Activated CD4-positive, alpha-beta memory T cell treated with anti-CD3 and anti-CD28 coated beads for 36 hours (primary cell): ENCODE measurements at regions of chr9 and their contacts with region 1.

Region 1: DNA sequence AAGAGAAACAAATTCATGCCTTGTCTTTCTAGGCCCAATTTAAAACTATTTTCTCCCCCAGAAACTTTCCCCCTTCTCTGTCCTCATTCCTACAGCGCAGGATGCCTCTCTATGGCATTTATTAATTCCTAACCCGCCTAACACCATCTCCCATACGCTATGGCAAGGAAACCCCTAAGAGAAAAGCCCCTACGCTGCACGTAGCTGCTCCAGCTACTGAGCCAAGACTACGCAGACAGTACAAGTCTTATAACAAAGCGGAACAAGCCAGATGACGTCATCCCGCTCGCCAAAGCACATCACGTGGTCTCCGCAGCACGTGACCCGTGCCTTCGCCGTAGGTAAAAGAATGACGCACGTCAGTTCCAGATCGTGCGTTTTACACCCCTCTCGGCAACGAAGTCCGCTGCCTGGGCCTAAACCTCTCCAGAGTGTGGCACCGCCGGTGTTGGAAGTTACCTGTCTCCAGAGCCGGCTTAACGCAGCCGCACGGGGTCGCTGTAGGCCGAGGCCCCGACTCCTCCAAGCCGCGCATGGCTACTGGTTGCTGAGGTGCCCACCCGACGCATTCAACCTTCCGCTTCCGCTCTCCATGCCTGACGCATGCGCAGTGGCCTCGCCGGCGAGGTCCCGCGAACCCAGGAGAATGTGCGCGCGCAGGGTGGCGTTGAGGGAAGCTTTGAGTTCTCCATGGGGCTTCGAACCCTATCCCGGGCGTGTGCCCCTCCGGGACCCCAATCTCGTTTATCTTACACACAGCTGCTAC is at the start of gene TRMO:
- DNase-seq: peak; percentile 98
- H3K4me3 Mint-ChIP-seq: peak within 1 kb of the TSS; percentile 85
- H3K27ac Mint-ChIP-seq: peak within 1 kb of the TSS; percentile 96
- H3K4me1 Mint-ChIP-seq: peaks cover 39% of the 10 kb centered on the region
- H3K27me3 Mint-ChIP-seq: peaks cover 2% of the 10 kb centered on the region
- total RNA-seq, gene TRMO: 13.3 to 13.4 TPM

Region 2: DNA sequence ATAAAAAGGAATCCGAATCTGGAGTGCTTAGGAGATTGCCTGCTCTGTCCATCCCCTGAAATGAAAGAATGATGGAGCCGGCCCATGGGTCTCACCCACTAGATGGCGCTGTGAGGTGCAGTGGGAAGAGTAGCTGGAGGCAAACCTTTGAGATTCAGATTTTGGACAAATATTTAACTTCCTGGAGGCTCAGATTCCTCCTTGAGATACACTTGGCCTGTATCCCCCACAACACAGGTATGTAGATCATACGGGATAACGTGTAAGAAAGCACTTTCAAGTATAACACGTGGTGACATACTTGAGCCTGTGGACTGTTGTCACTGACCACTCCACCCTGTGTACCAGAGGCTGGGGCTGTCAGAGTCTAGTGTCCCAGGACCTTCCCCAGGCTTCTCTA is 32.1 kb before region 1 on chr9:
- CTCF ChIA-PET with region 1: interaction called, 17 read pairs
- POLR2A ChIA-PET with region 1: interaction called, 4 read pairs
- intact Hi-C with region 1: loop called (anchors 1 kb)
- DNase-seq: peak; percentile 82
- H3K4me3 Mint-ChIP-seq: no peak overlapping the region
- H3K27ac Mint-ChIP-seq: no peak overlapping the region
- H3K4me1 Mint-ChIP-seq: peaks cover 7% of the 10 kb centered on the region
- H3K27me3 Mint-ChIP-seq: no peaks in the 10 kb centered on the region

Region 3: GRCh38 chr9:97911970-97912369 is 10.2 kb before region 1 on chr9:
- CTCF ChIA-PET with region 1: interaction called, 51 read pairs
- POLR2A ChIA-PET with region 1: interaction called, 26 read pairs
- intact Hi-C with region 1: no loop called
- DNase-seq: no peak
- H3K4me3 Mint-ChIP-seq: no peak overlapping the region
- H3K27ac Mint-ChIP-seq: no peak overlapping the region
- H3K4me1 Mint-ChIP-seq: peaks cover 76% of the 10 kb centered on the region
- H3K27me3 Mint-ChIP-seq: no peaks in the 10 kb centered on the region

Region 4: GRCh38 chr9:97982683-97983588 is 60.8 kb after region 1 on chr9 and contains the start of gene ANP32B:
- CTCF ChIA-PET with region 1: interaction called, 36 read pairs
- POLR2A ChIA-PET with region 1: interaction called, 77 read pairs
- intact Hi-C with region 1: loop called (anchors 1 kb)
- DNase-seq: peak; percentile 96
- H3K4me3 Mint-ChIP-seq: peak within 1 kb of the TSS; percentile 83
- H3K27ac Mint-ChIP-seq: peak within 1 kb of the TSS; percentile 93
- H3K4me1 Mint-ChIP-seq: peaks cover 37% of the 10 kb centered on the region
- H3K27me3 Mint-ChIP-seq: no peaks in the 10 kb centered on the region
- total RNA-seq, gene ANP32B: 352 to 358 TPM

Region 5: GRCh38 chr9:98034593-98035546 is 112.7 kb after region 1 on chr9:
- CTCF ChIA-PET with region 1: interaction called, 99 read pairs
- POLR2A ChIA-PET with region 1: interaction called, 5 read pairs
- intact Hi-C with region 1: loop called (anchors 1 kb)
- DNase-seq: peak; percentile 92
- H3K4me3 Mint-ChIP-seq: peak overlapping the region; percentile 27
- H3K27ac Mint-ChIP-seq: no peak overlapping the region
- H3K4me1 Mint-ChIP-seq: peaks cover 8% of the 10 kb centered on the region
- H3K27me3 Mint-ChIP-seq: peaks cover 1% of the 10 kb centered on the region

Region 6: DNA sequence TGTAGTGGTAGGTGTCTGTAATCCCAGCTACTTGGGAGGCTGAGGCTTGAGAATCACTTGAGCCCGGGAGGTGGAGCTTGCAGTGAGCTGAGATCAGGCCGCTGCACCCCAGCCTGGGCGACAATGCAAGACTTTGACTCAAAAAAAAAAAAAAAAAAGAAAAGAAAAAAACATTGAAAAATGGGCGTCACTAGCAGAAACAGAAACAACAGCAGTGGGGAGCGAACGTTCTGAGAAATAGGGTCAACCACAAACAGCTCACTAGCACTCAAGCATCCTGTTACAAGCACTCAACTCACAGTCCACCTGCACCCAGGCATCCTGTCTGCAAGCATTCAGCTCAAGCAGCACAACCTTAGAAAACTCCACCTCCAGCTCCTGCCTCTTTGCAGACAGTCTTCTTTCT is 179.7 kb after region 1 on chr9:
- CTCF ChIA-PET with region 1: no interaction called
- POLR2A ChIA-PET with region 1: no interaction called
- intact Hi-C with region 1: loop called (anchors 1 kb)
- DNase-seq: peak; percentile 89
- H3K4me3 Mint-ChIP-seq: peak overlapping the region; percentile 66
- H3K27ac Mint-ChIP-seq: peak overlapping the region; percentile 95
- H3K4me1 Mint-ChIP-seq: peaks cover 88% of the 10 kb centered on the region
- H3K27me3 Mint-ChIP-seq: no peaks in the 10 kb centered on the region

Region 7: DNA sequence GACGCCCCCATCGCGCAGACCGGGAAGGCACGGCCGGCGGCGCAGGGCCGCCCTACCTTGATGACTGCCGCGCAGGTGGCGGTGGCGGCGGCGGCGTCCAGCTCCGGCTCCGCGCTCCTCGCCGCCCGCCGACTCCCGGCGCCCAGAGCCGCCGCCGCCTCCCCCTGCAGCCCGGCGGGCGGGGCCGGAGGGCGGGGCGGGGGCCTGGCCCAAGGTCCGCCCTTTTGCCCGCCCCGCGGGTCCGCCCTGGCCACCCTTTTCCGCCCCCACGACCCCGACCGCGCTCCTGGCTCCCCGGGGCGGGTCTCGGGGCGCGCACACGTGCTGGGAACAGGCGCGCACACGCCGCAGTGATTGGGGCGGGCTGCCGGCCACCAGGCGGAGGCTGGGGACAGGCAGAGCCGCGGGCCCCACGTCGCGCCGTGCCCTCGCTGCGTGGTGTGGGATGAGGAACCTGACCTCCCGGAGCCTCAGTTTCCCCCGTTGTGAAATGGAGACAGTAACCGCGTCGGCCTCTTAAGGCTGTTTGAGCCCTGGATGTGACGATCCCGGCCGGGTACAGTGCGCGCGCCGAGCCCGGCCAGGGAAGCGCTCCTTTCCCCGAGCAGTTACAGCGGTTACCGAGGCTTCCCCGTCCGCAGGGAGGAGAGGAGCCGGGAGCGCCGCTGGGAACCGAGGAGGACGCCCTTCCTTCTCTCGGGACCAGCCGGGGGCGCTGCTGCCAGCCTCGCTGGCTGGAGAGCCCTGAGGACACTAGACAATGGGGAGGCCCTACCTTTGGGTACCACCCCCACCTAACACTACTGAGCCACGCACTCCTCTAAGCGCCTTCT is 270.6 kb after region 1 on chr9 and contains the start of gene CORO2A:
- CTCF ChIA-PET with region 1: no interaction called
- POLR2A ChIA-PET with region 1: no interaction called
- intact Hi-C with region 1: no loop called
- DNase-seq: peak; percentile 79
- H3K4me3 Mint-ChIP-seq: peak within 1 kb of the TSS; percentile 86
- H3K27ac Mint-ChIP-seq: peak within 1 kb of the TSS; percentile 49
- H3K4me1 Mint-ChIP-seq: peaks cover 21% of the 10 kb centered on the region
- H3K27me3 Mint-ChIP-seq: no peaks in the 10 kb centered on the region
- total RNA-seq, gene CORO2A: 9.8 to 9.9 TPM